Heart left ventricle (tissue), 16 donors: ENCODE measurements at regions of chr5 and their contacts with region 1.

Region 1: DNA sequence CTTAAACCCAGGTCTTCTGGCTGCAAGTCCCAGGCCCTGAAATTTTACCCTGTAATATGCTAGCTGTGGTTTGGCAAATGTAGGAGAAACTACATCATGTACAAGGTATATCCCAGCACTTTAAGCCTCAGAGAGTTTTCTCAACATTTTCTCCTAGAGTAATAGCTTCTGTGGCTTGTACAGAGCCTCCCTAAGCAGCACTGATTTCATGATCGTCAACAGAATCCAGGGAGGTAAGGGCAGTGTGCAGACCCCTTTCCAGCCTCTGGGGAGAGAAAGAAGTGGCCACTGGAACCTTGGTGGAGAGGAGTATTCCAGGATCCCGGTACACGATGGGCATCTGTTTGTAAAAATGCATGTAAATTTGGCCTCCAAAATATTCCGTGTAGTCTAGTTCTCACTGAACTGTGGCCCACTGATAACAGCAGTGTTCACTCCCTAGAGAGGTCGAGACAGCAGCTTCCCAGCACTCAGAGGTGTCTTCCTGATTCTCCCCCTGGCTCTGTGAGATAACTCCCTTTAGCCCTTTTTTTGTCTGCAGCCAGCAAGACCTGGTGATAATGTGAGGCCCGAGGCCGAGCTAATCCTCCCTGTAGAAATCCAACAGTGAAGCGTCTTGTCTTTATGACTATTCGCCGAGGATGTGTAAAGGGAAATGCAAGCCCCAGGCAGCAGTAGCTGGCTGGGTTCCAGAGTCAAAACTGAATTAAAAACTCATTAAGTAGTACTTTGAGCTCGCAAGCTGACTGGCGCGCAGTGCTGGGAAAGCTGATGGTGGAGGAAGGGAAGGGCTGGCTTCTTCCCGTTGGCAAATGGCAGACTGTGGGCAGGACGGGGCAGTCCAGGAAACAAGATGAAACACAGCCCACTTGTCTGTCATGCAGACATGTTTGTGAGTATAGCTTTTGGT is 59.0 kb downstream of the MAP1B start:
- DNase-seq: peak; percentile 54 to 72 (median 60)
- ATAC-seq: peak; percentile 10 to 62 (median 50)
- H3K4me3 ChIP-seq: peak overlapping the region in 6 of 12 donors; percentile 1 to 31 (median 26)
- H3K27ac ChIP-seq: peak overlapping the region in 11 of 12 donors; percentile 19 to 65 (median 41)
- H3K4me1 ChIP-seq: peaks cover 0 to 48% (median 21%) of the 10 kb centered on the region in 12 donors
- H3K27me3 ChIP-seq: no peaks in the 10 kb centered on the region
- CTCF ChIP-seq: no peak
- POLR2A ChIP-seq: no peak

Region 2: GRCh38 chr5:72197393-72197792 is 31.1 kb after region 1 on chr5:
- intact Hi-C with region 1: loop called in 1 of 10 experiments (anchors 2 kb)
- DNase-seq: no peak
- ATAC-seq: no peak
- H3K4me3 ChIP-seq: no peak overlapping the region
- H3K27ac ChIP-seq: no peak overlapping the region
- H3K4me1 ChIP-seq: peaks cover 0 to 2% (median 0%) of the 10 kb centered on the region in 12 donors
- H3K27me3 ChIP-seq: no peaks in the 10 kb centered on the region
- CTCF ChIP-seq: no peak
- POLR2A ChIP-seq: no peak

Region 3: DNA sequence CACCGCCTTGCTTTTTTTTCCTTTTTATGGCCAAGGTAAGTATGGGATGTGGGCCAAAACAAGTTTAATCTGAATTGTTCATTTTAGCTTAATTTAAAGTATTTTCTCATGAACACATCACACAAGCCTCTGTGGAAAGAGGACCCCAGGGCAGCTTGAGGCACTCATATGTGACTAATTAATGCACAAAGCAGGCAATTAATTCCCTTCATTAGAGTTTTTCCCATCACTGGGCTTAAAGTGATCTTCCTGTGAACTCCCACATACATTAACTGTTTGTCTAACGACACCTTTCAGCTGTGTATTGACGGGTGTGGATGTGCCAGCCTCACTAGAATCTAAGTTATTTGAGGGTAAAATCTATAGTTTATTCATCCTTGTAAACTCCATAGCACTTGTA is 50.4 kb after region 1 on chr5:
- intact Hi-C with region 1: loop called in 1 of 10 experiments (anchors 2 kb)
- DNase-seq: no peak
- ATAC-seq: no peak
- H3K4me3 ChIP-seq: no peak overlapping the region
- H3K27ac ChIP-seq: no peak overlapping the region
- H3K4me1 ChIP-seq: peaks cover 0 to 5% (median 0%) of the 10 kb centered on the region in 12 donors
- H3K27me3 ChIP-seq: no peaks in the 10 kb centered on the region
- CTCF ChIP-seq: no peak
- POLR2A ChIP-seq: no peak